ENCODE measurements at regions of chr16 and their contacts with region 1.

Region 1: GRCh38 chr16:66569827-66570405 is 3.7 kb downstream of the CMTM1 start:
- DNase-seq: peak; percentile 21
- H3K4me3 ChIP-seq: no peak overlapping the region
- CTCF ChIP-seq: no peak

Region 2: DNA sequence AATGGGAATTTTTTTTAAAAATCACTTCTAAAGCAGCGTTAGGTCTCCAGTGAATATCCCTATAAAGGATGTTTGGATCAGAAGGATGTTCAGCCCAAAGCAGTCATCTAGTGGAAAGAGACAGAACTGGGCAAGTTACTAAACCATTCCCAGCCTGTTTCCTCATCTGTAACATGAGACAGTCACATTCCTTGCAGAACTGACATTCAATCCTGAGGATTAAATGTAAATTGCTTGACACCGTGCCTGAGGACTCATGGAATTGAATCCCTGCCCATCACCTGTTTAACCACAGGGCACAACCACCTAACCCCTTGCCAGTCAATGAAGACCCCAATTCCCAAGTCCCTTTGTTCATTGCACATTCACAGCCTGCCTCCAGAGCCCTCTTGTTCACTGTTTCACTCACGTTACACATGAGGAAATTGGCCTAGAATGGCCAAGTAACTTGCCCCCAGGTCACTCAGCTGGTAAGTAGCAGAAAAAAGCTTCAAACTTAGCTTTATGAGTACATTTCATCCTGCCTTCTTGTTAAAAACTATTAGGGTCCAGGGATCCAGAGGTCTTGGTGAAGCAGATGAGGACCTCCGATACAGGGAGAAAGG is 10.8 kb after region 1 on chr16:
- CTCF ChIA-PET with region 1: interaction called, 21 read pairs
- POLR2A ChIA-PET with region 1: interaction called, 4 read pairs
- DNase-seq: peak; percentile 58
- H3K4me3 ChIP-seq: no peak overlapping the region
- CTCF ChIP-seq: peak; percentile 32

Region 3: DNA sequence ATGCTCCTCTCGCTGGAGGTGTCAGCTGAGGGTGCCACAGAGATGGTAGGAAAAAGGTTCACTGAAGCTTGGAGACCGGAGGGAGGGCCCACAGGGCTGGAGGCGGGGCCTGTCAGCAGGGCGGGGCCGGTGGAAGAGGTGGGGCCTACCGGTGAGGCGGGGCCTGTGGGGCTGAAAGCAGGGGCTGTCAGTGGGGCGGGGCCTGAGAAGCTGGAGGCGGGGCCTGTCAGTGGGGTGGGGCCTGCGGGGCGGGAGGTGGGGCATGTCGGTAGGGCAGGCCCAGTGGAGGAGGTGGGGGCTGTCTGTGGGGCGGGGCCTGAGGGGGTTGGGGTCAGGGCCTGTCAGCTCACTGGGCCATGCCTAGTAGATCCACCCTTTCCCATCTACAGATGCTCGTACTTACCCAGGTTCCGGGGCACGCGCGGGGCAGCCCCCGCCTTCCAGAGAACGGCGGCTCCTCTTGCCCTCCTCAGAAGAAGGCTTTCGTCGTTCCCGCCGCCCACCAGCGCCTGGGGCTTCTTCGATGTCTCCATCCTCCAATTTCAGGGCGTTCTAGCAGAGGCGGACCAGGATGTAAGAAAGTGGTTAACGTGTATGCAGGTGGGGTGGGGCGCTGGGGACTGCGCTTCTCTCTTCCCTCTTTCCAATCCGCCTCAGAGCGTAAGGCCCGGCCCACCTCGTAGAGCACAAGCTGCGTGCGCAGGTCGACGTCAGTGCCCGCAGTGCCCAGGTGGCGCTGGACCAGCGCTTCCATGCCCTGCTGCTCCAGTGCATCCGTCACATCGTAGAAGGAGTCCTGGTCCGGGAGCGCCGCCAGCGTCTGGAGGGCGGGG is 666.9 kb after region 1 on chr16:
- CTCF ChIA-PET with region 1: no interaction called
- POLR2A ChIA-PET with region 1: no interaction called
- DNase-seq: no peak
- H3K4me3 ChIP-seq: no peak overlapping the region
- CTCF ChIP-seq: no peak

Measured in AG04449 (cell line).